IMR-90 (cell line): ENCODE measurements at regions of chr11 and their contacts with region 1.

Region 1: GRCh38 chr11:66835768-66836405 is 7.4 kb upstream of the RCE1 start:
- DNase-seq: peak; percentile 65
- ATAC-seq: peak; percentile 79
- H3K4me3 ChIP-seq: no peak overlapping the region
- H3K27ac ChIP-seq: peak overlapping the region; percentile 71; the same call in 1 of the 2 replicates
- H3K4me1 ChIP-seq: peaks cover 6% of the 10 kb centered on the region
- H3K27me3 ChIP-seq: no peaks in the 10 kb centered on the region
- CTCF ChIP-seq: no peak
- POLR2A ChIP-seq: no peak
- RAD21 ChIP-seq: no peak

Region 2: GRCh38 chr11:66545701-66546367 is 290.1 kb before region 1 on chr11 and contains the start of gene ZDHHC24:
- CTCF ChIA-PET with region 1: no interaction called
- POLR2A ChIA-PET with region 1: no interaction called
- dilution Hi-C with region 1: no loop called
- in situ Hi-C with region 1: no loop called
- intact Hi-C with region 1: loop called (anchors 1 kb)
- DNase-seq: peak; percentile 95
- ATAC-seq: peak; percentile 96
- H3K4me3 ChIP-seq: peak within 1 kb of the TSS; percentile 75
- H3K27ac ChIP-seq: peak within 1 kb of the TSS; percentile 30; the same call in 1 of the 2 replicates
- H3K4me1 ChIP-seq: peaks cover 6% of the 10 kb centered on the region
- H3K27me3 ChIP-seq: peaks cover 23% of the 10 kb centered on the region
- CTCF ChIP-seq: no peak
- POLR2A ChIP-seq: peak; percentile 87
- RAD21 ChIP-seq: no peak
- total RNA-seq, gene ZDHHC24: 3.2 and 3.6 TPM in 2 replicates

Region 3: GRCh38 chr11:66579017-66579606 is 256.8 kb before region 1 on chr11:
- CTCF ChIA-PET with region 1: no interaction called
- POLR2A ChIA-PET with region 1: no interaction called
- dilution Hi-C with region 1: no loop called
- in situ Hi-C with region 1: loop called (anchors 10 kb)
- intact Hi-C with region 1: loop called (anchors 2 kb)
- DNase-seq: peak; percentile 77
- ATAC-seq: peak; percentile 93
- H3K4me3 ChIP-seq: no peak overlapping the region
- H3K27ac ChIP-seq: no peak overlapping the region
- H3K4me1 ChIP-seq: peaks cover 6% of the 10 kb centered on the region
- H3K27me3 ChIP-seq: no peaks in the 10 kb centered on the region
- CTCF ChIP-seq: peak; percentile 82
- POLR2A ChIP-seq: no peak
- RAD21 ChIP-seq: peak; percentile 85

Region 4: DNA sequence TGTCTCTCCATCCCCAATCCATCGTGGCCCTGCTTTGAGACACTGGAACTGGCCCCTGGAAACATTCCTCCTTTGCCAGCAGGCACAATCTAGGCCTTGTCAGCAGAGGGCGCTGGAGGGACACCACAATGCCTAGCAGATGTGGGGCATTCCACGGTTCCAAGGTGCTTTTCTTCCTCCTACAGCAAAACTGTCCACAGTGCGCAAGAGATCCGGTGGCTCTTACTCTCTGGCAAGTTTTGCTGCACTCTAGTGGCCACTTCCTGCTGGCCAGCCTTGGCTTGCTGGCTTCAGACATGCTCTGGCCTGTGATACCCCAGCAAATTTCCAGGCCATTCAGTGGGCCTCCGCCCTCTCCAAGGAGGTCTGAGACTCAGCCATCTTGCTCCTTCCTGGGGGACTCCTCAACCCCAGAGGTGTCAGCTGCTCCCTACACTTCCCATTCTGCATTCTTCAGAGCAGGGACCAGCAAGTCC is 141.1 kb before region 1 on chr11:
- CTCF ChIA-PET with region 1: interaction called, 5 read pairs
- POLR2A ChIA-PET with region 1: interaction called, 3 read pairs
- dilution Hi-C with region 1: no loop called
- in situ Hi-C with region 1: loop called (anchors 5 kb)
- intact Hi-C with region 1: loop called (anchors 1 kb)
- DNase-seq: peak; percentile 98
- ATAC-seq: peak; percentile 99
- H3K4me3 ChIP-seq: no peak overlapping the region
- H3K27ac ChIP-seq: no peak overlapping the region
- H3K4me1 ChIP-seq: no peaks in the 10 kb centered on the region
- H3K27me3 ChIP-seq: no peaks in the 10 kb centered on the region; the same call in 1 of the 2 replicates
- CTCF ChIP-seq: peak; percentile 98
- POLR2A ChIP-seq: peak; percentile 61
- RAD21 ChIP-seq: peak; percentile 90

Region 5: GRCh38 chr11:67174311-67174710 is 338.4 kb after region 1 on chr11:
- CTCF ChIA-PET with region 1: no interaction called
- POLR2A ChIA-PET with region 1: no interaction called
- dilution Hi-C with region 1: no loop called
- in situ Hi-C with region 1: no loop called
- intact Hi-C with region 1: no loop called
- DNase-seq: no peak
- ATAC-seq: no peak
- H3K4me3 ChIP-seq: no peak overlapping the region
- H3K27ac ChIP-seq: no peak overlapping the region
- H3K4me1 ChIP-seq: peaks cover 9% of the 10 kb centered on the region
- H3K27me3 ChIP-seq: no peaks in the 10 kb centered on the region
- CTCF ChIP-seq: no peak
- POLR2A ChIP-seq: no peak
- RAD21 ChIP-seq: no peak